ENCODE measurements at regions of chr3 and their contacts with region 1.

Region 1: GRCh38 chr3:111978493-111979433 is at the start of gene ABHD10:
- DNase-seq: peak; percentile 95
- ATAC-seq: peak; percentile 97
- H3K4me3 ChIP-seq: peak within 1 kb of the TSS; percentile 79 to 95 (median 86)
- H3K27ac ChIP-seq: peak within 1 kb of the TSS; percentile 80
- H3K4me1 ChIP-seq: peaks cover 23% of the 10 kb centered on the region
- H3K27me3 ChIP-seq: no peaks in the 10 kb centered on the region
- CTCF ChIP-seq: no peak
- EP300 ChIP-seq: no peak; a peak in 1 of 4 replicates
- POLR2A ChIP-seq: peak; percentile 97 to 99
- RAD21 ChIP-seq: no peak
- total RNA-seq, gene ABHD10: 50.2 and 84.8 TPM in 2 replicates

Region 2: GRCh38 chr3:111735271-111735758 is 243.4 kb before region 1 on chr3:
- CTCF ChIA-PET with region 1: no interaction called
- POLR2A ChIA-PET with region 1: interaction called, 10 read pairs
- in situ Hi-C with region 1: no loop called
- intact Hi-C with region 1: no loop called
- DNase-seq: peak; percentile 90
- ATAC-seq: no peak
- H3K4me3 ChIP-seq: peak overlapping the region in 2 of 3 experiments; percentile 38 to 79; a peak in 3 of 6 replicates
- H3K27ac ChIP-seq: peak overlapping the region; percentile 70
- H3K4me1 ChIP-seq: peaks cover 83% of the 10 kb centered on the region
- H3K27me3 ChIP-seq: no peaks in the 10 kb centered on the region
- CTCF ChIP-seq: no peak
- EP300 ChIP-seq: peak in 1 of 2 experiments; percentile 82; a peak in 2 of 4 replicates
- POLR2A ChIP-seq: 0 out of 4 replicates have a peak, but pooled peaks of 1 of the 2 experiments have one; percentile 26
- RAD21 ChIP-seq: no peak

Region 3: DNA sequence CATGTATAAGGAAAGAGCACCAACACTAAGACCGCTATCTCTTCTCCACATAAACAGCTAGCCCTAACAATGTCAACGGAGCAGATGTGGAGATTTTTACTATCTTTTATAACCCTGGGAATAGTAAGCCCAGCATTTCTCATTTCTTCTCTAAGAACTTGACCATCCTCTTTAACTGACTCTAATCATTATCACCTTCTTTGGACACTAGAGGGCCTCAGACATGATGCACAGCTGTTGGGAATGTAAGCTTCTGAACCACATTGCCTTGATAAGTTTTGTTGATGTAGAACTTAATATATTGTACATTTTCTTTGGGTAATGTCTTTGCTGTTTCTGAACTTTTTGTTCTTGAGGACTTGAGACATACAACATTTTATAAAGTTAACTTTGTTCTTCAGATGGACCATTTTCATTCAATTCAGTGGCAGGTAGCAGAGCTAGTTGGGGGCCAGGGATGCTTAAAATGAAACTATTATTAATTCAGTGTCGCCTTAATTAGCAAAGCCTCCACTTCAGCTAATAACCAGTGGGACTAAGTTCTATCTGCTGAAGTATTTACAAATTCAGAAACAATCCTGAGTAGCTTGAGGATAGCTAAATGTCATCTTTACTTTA is 10.4 kb after region 1 on chr3:
- CTCF ChIA-PET with region 1: no interaction called
- POLR2A ChIA-PET with region 1: interaction called, 21 read pairs
- in situ Hi-C with region 1: no loop called
- intact Hi-C with region 1: no loop called
- DNase-seq: peak; percentile 53
- ATAC-seq: peak; percentile 96
- H3K4me3 ChIP-seq: no peak overlapping the region
- H3K27ac ChIP-seq: no peak overlapping the region
- H3K4me1 ChIP-seq: no peaks in the 10 kb centered on the region
- H3K27me3 ChIP-seq: no peaks in the 10 kb centered on the region
- CTCF ChIP-seq: peak; percentile 72
- EP300 ChIP-seq: no peak
- POLR2A ChIP-seq: no peak
- RAD21 ChIP-seq: peak; percentile 20; the same call in 1 of the 2 replicates

Region 4: DNA sequence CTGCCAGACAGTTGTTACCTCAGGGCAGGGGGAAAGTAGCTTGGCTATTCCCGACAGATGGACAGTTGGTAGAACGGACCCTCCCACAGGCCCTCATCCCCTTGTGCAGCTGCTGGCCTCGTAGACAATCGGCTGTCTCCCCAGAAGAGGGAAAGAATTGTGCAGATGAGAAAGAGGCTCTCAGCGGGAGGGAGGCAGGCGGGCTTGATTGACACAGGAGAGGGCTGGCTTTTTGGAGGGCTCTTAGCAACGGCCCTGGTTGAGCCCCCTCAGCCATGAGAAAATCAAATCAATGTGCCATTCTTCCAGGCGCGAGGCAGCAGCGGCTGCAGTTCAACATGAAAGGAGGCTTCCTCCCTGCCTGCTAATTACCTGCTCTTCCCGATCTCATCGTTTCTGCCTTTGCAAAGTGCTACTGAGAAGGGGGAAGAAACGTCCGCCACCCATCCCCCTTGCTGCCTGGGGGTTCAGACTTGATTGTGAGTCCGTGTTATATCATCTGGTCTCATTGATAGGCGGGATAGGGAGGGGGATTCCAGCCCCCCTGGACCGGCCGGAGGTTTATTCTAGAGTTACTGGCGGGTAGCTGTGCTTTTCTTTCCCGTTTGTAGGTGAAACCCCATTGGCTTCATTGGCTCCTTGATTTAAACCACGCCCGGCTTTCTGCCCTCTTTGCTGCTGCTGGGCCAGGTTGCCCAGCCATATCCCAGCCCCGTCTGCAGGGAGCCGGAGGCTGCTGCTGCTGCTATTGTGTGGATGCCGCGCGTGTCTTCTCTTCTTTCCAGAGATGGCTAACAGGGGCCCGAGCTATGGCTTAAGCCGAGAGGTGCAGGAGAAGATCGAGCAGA is 20.1 kb after region 1 on chr3 and contains the start of gene TAGLN3:
- CTCF ChIA-PET with region 1: no interaction called
- POLR2A ChIA-PET with region 1: interaction called, 11 read pairs
- in situ Hi-C with region 1: no loop called
- intact Hi-C with region 1: no loop called
- DNase-seq: no peak
- ATAC-seq: peak; percentile 84
- H3K4me3 ChIP-seq: peak within 1 kb of the TSS; percentile 37 to 68 (median 51)
- H3K27ac ChIP-seq: no peak within 1 kb of the TSS
- H3K4me1 ChIP-seq: peaks cover 19% of the 10 kb centered on the region
- H3K27me3 ChIP-seq: peaks cover 5 to 23% of the 10 kb centered on the region in 2 experiments
- CTCF ChIP-seq: no peak
- EP300 ChIP-seq: no peak
- POLR2A ChIP-seq: no peak
- RAD21 ChIP-seq: no peak
- total RNA-seq, gene TAGLN3: 0.80 and 0.91 TPM in 2 replicates

Region 5: GRCh38 chr3:112013058-112013783 is 34.5 kb after region 1 on chr3:
- CTCF ChIA-PET with region 1: no interaction called
- POLR2A ChIA-PET with region 1: interaction called, 21 read pairs
- in situ Hi-C with region 1: no loop called
- intact Hi-C with region 1: no loop called
- DNase-seq: peak; percentile 49
- ATAC-seq: peak; percentile 97
- H3K4me3 ChIP-seq: peak overlapping the region; percentile 46 to 74 (median 53); a peak in 5 of 6 replicates
- H3K27ac ChIP-seq: no peak overlapping the region
- H3K4me1 ChIP-seq: peaks cover 17% of the 10 kb centered on the region
- H3K27me3 ChIP-seq: peaks cover 0 to 5% of the 10 kb centered on the region in 2 experiments; a peak in 1 of 5 replicates
- CTCF ChIP-seq: peak; percentile 81
- EP300 ChIP-seq: no peak
- POLR2A ChIP-seq: no peak
- RAD21 ChIP-seq: peak; percentile 57